Psoas muscle (tissue), 8 donors: ENCODE measurements at regions of chr7 and their contacts with region 1.

Region 1: DNA sequence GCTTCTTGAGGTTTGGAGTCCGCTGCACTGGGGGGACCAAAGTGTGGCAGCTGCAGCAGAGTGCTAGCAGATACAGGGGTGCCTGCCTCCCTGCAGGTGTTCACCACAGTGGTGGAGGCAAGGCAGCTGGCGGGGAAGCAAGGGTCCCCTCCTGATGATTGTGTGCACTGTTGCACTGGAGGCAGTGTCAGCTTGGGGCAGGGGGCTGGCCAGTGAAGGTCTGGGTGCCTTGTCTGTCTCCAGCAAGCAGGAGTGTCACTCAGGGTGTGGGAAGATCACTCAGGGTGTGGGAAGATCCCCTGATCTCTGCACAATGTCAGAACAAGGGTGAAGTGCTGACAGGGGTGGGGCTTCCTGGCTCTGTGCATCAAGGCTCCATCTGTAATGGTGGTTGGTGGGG is 36.3 kb upstream of the PPP1R3A start:
- DNase-seq: no peak
- ATAC-seq: no peak
- H3K4me3 ChIP-seq: no peak overlapping the region
- H3K27ac ChIP-seq: no peak overlapping the region
- H3K4me1 ChIP-seq: no peaks in the 10 kb centered on the region
- H3K27me3 ChIP-seq: no peaks in the 10 kb centered on the region
- CTCF ChIP-seq: no peak

Region 2: GRCh38 chr7:114007386-114007785 is 52.2 kb after region 1 on chr7:
- intact Hi-C with region 1: loop called in 1 of 2 experiments (anchors 2 kb)
- DNase-seq: no peak
- ATAC-seq: no peak
- H3K4me3 ChIP-seq: no peak overlapping the region
- H3K27ac ChIP-seq: no peak overlapping the region
- H3K4me1 ChIP-seq: no peaks in the 10 kb centered on the region
- H3K27me3 ChIP-seq: no peaks in the 10 kb centered on the region
- CTCF ChIP-seq: no peak